Activated B cell treated with CpG ODN at 0.5 μM for 24 hours (primary cell): ENCODE measurements at regions of chr5 and their contacts with region 1.

Region 1: GRCh38 chr5:35003018-35003957 is 44.5 kb downstream of the AGXT2 start:
- DNase-seq: no peak
- ATAC-seq: peak; percentile 40
- H3K4me3 Mint-ChIP-seq: no peak overlapping the region
- H3K27ac Mint-ChIP-seq: no peak overlapping the region
- H3K4me1 Mint-ChIP-seq: no peaks in the 10 kb centered on the region
- H3K27me3 Mint-ChIP-seq: peaks cover 14% of the 10 kb centered on the region
- CTCF ChIP-seq: peak; percentile 38

Region 2: DNA sequence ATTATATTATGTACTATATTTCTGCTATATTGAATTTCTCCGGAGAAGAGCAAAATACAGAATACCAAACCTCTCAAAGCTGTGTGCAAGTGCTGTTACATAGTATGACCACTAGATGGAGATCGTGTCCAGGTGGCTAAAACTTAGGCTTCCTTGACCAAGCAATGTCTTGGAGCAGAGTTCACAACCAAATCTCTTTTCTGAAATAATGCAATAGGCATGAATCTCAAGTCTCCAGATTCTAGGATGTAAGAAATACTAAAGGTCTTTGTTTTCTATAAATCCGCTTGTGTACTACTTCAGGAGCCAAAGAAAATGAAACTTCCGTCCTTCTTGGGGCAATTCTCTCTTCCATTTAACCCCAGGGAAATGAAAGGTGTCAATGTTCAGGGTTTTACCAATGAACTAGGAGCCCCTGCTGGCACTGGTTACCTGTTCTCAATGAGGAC is 528.7 kb before region 1 on chr5:
- CTCF ChIA-PET with region 1: interaction called, 3 read pairs
- POLR2A ChIA-PET with region 1: no interaction called
- intact Hi-C with region 1: loop called (anchors 1 kb)
- DNase-seq: no peak
- ATAC-seq: peak; percentile 70
- H3K4me3 Mint-ChIP-seq: no peak overlapping the region
- H3K27ac Mint-ChIP-seq: no peak overlapping the region
- H3K4me1 Mint-ChIP-seq: no peaks in the 10 kb centered on the region
- H3K27me3 Mint-ChIP-seq: peaks cover 8% of the 10 kb centered on the region
- CTCF ChIP-seq: peak; percentile 88

Region 3: DNA sequence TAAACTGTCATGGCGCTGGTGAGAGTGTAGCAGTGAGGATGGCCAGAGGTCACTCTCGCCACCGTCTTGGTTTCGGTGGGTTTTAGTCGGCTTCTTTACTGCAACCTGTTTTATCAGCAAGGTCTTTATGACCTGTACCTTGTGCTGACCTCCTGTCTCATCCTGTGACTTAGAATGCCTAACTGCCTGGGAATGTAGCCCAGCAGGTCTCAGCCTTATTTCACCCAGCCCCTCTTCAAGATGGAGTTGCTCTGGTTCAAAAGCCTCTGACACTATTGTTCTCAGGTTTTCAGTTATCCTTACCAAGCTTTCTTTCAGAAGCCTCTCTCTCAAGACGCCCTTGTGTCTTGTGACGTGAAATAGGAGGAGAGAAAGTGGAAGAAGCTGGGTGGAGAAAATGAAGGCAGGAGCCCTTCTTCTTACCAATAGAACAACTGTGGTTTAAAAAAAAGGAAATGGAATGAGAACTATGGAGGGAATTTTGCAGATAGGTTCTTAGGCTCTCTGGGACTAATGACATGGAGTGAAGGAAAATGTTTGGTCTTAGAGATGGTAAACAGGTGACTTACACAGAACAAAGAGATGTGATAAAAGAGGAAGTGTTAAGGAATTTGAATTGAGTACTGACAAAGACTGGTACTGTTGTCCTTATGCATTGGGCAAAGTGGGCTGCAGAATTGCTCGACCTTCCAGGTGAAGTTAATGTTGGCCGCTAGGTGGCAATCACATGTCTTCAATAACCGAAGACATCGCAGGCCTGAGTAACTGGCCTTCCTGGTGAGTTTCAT is 480.5 kb before region 1 on chr5:
- CTCF ChIA-PET with region 1: interaction called, 12 read pairs
- POLR2A ChIA-PET with region 1: no interaction called
- intact Hi-C with region 1: loop called (anchors 1 kb)
- DNase-seq: no peak
- ATAC-seq: peak; percentile 71
- H3K4me3 Mint-ChIP-seq: no peak overlapping the region
- H3K27ac Mint-ChIP-seq: no peak overlapping the region
- H3K4me1 Mint-ChIP-seq: peaks cover 2% of the 10 kb centered on the region
- H3K27me3 Mint-ChIP-seq: no peaks in the 10 kb centered on the region
- CTCF ChIP-seq: no peak

Region 4: DNA sequence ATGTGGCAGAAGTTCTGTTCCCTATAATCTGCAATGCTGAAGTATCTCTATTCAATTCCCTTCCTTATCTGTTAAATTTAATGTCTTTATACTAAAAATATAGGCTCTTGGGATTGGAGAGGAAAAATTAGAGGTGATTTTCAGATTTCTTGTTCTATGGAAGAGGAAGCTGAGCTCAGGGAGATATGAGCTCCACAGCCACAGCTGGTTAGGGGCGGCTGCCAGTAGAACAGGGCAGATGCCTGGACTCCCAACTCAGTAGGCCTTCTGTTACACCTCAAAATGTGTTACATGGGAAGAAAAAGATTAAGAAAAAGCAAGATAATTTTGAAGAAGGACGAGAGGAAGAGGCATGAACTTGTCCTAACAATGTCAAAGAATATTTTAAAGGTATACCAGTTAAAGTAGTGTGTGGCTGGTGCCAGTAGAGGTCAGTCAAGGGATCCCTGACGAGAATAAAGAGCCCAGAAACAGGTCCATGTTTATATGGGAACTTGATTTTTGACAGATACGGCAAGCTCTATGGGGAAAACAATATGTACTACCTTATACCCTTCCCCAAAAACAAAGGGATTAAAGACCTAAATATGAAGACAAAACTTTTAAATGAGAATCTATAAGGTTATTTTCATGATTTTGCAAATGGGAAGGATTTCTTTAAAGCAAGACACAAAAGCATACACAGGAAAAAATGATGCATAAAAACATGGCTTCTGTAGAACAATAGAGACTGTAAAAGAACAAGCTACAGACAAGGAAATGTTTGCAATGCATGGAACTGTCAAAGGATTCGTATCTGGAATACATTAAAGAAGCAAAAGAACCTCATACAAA is 45.2 kb before region 1 on chr5:
- CTCF ChIA-PET with region 1: interaction called, 7 read pairs
- POLR2A ChIA-PET with region 1: no interaction called
- intact Hi-C with region 1: loop called (anchors 1 kb)
- DNase-seq: no peak
- ATAC-seq: no peak
- H3K4me3 Mint-ChIP-seq: no peak overlapping the region
- H3K27ac Mint-ChIP-seq: no peak overlapping the region
- H3K4me1 Mint-ChIP-seq: peaks cover 5% of the 10 kb centered on the region
- H3K27me3 Mint-ChIP-seq: no peaks in the 10 kb centered on the region
- CTCF ChIP-seq: no peak

Region 5: DNA sequence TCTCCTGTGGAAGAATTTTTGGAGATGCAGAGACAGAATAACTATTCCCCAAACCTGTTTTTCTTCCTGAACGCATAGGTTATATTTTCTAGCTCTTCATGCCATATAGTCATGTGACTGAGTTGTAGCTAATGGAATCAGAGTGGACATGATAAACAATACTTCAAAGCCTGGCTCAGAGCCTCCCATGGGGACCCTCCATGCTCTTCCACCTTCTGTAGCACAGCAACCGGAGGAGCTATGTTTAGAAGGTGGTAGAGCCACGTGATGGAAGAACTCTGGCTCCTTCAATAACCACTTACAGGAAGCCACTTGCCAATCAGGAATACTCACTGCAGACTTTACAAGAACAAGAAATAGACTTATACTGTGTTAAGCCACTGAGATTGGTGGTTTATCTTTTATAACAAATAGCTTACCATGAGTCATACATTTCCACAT is 1199.3 kb after region 1 on chr5:
- CTCF ChIA-PET with region 1: no interaction called
- POLR2A ChIA-PET with region 1: no interaction called
- intact Hi-C with region 1: no loop called
- DNase-seq: no peak
- ATAC-seq: no peak
- H3K4me3 Mint-ChIP-seq: no peak overlapping the region
- H3K27ac Mint-ChIP-seq: no peak overlapping the region
- H3K4me1 Mint-ChIP-seq: no peaks in the 10 kb centered on the region
- H3K27me3 Mint-ChIP-seq: no peaks in the 10 kb centered on the region
- CTCF ChIP-seq: no peak